Mammary epithelial cell (primary cell): ENCODE measurements at regions of chr3 and their contacts with region 1.

Region 1: DNA sequence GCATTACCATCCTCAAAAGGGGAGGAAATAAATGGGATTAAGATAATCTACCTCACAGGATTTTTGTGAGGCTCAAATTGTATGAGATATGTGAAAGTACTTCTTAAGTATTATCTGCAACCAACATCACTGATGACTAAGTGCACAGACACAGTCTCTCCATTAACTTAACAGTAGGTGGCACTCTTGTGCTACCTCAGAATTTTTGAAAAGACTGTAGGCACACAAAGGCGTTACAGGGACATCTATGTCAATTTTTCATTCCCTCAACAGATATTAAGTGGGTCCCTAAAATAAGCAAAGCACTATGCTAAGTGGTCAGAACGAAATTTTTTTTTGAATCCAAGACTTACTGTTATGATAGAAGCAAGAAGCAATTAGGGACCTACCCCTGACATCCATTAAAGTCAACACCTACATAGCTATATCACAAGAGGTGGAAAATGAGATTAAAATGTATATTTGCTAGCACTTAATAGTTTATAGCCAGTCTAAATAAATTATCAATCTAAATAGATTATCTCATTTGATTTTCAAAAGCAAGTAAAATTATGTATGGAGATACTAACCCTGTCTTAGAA is 52.9 kb downstream of the RYK start:
- DNase-seq: peak; percentile 68
- H3K4me3 ChIP-seq: no peak overlapping the region
- H3K27ac ChIP-seq: no peak overlapping the region
- H3K4me1 ChIP-seq: peaks cover 50% of the 10 kb centered on the region
- H3K27me3 ChIP-seq: no peaks in the 10 kb centered on the region
- CTCF ChIP-seq: peak; percentile 71 to 76

Region 2: GRCh38 chr3:134145177-134145576 is 52.6 kb before region 1 on chr3:
- CTCF ChIA-PET with region 1: no interaction called
- dilution Hi-C with region 1: no loop called
- in situ Hi-C with region 1: no loop called
- intact Hi-C with region 1: no loop called
- DNase-seq: no peak
- H3K4me3 ChIP-seq: no peak overlapping the region
- H3K27ac ChIP-seq: no peak overlapping the region
- H3K4me1 ChIP-seq: peaks cover 10% of the 10 kb centered on the region
- H3K27me3 ChIP-seq: no peaks in the 10 kb centered on the region
- CTCF ChIP-seq: no peak

Region 3: DNA sequence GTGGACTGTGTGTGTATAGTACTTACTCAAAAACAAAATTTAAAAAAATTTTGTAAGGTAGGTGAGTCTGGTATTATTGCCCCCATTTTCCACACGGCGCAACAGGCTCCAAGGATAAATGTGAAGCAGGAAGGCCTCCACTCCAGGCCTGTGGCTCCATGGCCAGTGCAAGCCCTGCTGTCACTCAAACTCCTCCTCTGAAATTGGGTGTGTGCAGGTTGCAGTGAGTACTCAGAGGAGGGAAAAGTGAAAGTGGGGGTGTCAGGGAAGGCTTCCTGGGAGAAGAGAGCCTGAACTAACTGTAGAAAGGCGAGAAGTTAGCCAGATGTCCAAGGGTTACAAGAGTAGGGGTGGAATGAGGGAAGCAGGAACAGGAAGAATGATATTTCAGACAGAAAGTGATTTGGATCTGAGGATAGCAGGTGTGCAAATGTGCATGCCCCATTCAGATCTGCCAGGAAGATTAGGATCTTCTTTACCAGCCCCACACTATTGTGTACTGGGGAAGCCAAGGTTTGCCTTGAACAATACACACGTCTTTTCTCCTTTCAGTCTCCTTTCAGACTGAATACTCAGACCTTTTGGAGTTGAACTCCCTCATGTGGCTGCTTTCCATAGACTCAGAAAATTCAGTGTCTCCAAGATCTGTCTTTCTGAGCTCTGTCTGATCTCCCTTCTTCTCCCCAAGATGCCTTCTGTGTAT is 101.6 kb after region 1 on chr3:
- CTCF ChIA-PET with region 1: no interaction called
- dilution Hi-C with region 1: loop called (anchors 5 kb)
- in situ Hi-C with region 1: no loop called
- intact Hi-C with region 1: loop called (anchors 1 kb)
- DNase-seq: peak; percentile 27
- H3K4me3 ChIP-seq: no peak overlapping the region
- H3K27ac ChIP-seq: no peak overlapping the region
- H3K4me1 ChIP-seq: peaks cover 3% of the 10 kb centered on the region
- H3K27me3 ChIP-seq: no peaks in the 10 kb centered on the region
- CTCF ChIP-seq: peak; percentile 10 to 62